ENCODE measurements at regions of chr11 and their contacts with region 1.

Region 1: GRCh38 chr11:14342906-14343305 is 16.1 kb downstream of the RRAS2 start:
- DNase-seq: no peak
- H3K4me3 ChIP-seq: peak overlapping the region in 1 of 4 experiments; percentile 64; a peak in 1 of 8 replicates
- H3K27ac ChIP-seq: no peak overlapping the region
- H3K4me1 ChIP-seq: peaks cover 0 to 29% (median 7%) of the 10 kb centered on the region in 4 experiments; a peak in 5 of 7 replicates
- H3K27me3 ChIP-seq: no peaks in the 10 kb centered on the region
- CTCF ChIP-seq: no peak
- EP300 ChIP-seq: no peak
- POLR2A ChIP-seq: no peak
- RAD21 ChIP-seq: no peak

Region 2: GRCh38 chr11:14089690-14090462 is 253.0 kb before region 1 on chr11:
- CTCF ChIA-PET with region 1: no interaction called
- POLR2A ChIA-PET with region 1: no interaction called
- DNase-seq: no peak
- H3K4me3 ChIP-seq: no peak overlapping the region
- H3K27ac ChIP-seq: no peak overlapping the region
- H3K4me1 ChIP-seq: no peaks in the 10 kb centered on the region
- H3K27me3 ChIP-seq: no peaks in the 10 kb centered on the region; a peak in 1 of 7 replicates
- CTCF ChIP-seq: no peak
- EP300 ChIP-seq: no peak
- POLR2A ChIP-seq: no peak
- RAD21 ChIP-seq: no peak

Region 3: GRCh38 chr11:14330881-14331280 is 12.0 kb before region 1 on chr11:
- CTCF ChIA-PET with region 1: interaction called, 4 read pairs
- POLR2A ChIA-PET with region 1: interaction called, 18 read pairs
- DNase-seq: no peak
- H3K4me3 ChIP-seq: no peak overlapping the region
- H3K27ac ChIP-seq: no peak overlapping the region
- H3K4me1 ChIP-seq: peaks cover 4 to 26% (median 9%) of the 10 kb centered on the region in 4 experiments; a peak in 6 of 7 replicates
- H3K27me3 ChIP-seq: no peaks in the 10 kb centered on the region
- CTCF ChIP-seq: no peak
- EP300 ChIP-seq: no peak
- POLR2A ChIP-seq: no peak
- RAD21 ChIP-seq: no peak

Region 4: DNA sequence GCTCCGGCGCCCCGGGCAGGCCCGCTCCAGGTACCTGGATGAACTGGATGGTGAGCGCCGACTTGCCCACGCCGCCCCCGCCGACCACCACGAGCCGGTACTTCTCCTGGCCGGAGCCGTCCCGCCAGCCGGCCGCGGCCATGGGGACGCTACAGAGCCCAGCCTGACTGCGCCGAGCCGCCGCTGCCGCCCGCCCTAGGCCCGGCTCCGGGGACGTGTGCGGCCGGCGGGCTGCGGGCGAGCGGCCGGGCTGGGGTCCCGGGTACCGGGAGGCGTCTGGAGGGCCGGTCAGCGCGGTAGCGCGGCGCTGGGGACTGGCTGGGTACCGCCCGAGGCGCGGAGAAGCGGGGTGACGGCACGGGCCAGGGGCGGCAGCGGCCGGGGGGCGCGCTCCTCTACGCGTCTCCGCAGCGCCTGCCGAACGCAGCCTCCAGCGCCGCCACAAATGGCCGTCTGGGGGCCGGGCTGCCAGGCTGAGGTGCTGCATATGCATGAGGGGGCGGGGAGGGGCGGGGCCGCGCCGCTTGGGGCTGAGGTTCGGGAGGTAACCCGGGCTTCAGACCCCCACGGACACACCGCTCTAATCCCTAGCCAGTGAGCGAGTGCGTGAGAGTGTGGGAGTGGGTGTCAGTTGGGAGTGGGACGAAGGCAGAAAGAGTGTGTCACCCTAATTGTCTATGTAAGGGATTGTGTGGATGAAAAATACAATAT is 16.0 kb after region 1 on chr11 and contains the start of gene RRAS2:
- CTCF ChIA-PET with region 1: interaction called, 6 read pairs
- POLR2A ChIA-PET with region 1: interaction called, 15 read pairs
- DNase-seq: peak in 1 of 2 experiments; percentile 84
- H3K4me3 ChIP-seq: peak within 1 kb of the TSS; percentile 85 to 99 (median 94)
- H3K27ac ChIP-seq: peak within 1 kb of the TSS; percentile 78; the same call in 1 of the 2 replicates
- H3K4me1 ChIP-seq: peaks cover 0 to 7% (median 4%) of the 10 kb centered on the region in 4 experiments; a peak in 6 of 7 replicates
- H3K27me3 ChIP-seq: no peaks in the 10 kb centered on the region
- CTCF ChIP-seq: no peak
- EP300 ChIP-seq: no peak
- POLR2A ChIP-seq: peak; percentile 74 to 81; a peak in 2 of 3 replicates
- RAD21 ChIP-seq: no peak
- total RNA-seq, gene RRAS2: 220 and 234 TPM in 2 replicates